ENCODE measurements at regions of chr1 and their contacts with region 1.

Region 1: DNA sequence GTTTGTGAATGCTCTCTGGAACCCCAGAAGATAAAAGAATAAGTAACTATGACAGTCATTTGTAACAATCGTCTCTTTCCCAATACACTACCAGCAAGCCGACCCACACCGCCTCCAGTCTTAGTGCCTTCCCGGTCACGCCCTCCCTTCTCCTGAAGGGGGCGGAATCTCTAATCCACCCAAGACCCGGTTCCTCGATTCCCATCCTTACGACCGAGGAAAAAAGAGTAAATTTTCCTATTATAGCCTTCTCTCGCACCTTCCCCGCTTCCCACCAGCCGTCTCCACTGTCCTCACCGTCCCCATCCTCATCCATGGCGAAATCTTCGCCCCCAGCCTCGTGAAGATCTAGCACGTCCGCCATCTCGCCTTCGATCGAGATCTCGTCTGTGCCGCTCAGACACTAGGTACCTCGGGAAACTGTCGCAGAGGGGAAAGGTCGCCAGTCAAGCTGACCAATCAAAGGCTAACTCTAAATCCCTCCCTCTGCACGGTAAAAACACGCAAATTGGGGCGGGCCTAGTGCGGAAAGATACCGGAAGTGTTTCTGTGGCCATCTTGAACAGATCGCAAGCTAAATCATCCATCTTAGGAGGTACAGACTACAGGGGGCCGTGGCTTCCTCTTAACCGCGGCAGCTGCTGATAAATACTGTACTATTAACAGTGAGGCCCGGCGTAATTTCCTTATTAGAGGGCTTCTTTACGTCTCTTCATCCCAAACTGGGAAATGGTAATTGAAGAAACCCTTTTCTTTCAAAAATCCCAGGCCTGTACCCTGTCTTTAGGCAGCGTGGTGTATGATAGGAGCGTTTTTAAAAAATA is at the start of gene RBM8A:
- DNase-seq: peak; percentile 81 to 98 (median 90)
- ATAC-seq: peak; percentile 97
- H3K4me3 ChIP-seq: peak within 1 kb of the TSS; percentile 70
- H3K27ac ChIP-seq: peak within 1 kb of the TSS; percentile 96
- H3K4me1 ChIP-seq: peaks cover 10 to 12% of the 10 kb centered on the region in 2 experiments; a peak in 4 of 5 replicates
- H3K27me3 ChIP-seq: no peaks in the 10 kb centered on the region
- CTCF ChIP-seq: peak; percentile 49 to 78 (median 49)
- EP300 ChIP-seq: no peak
- POLR2A ChIP-seq: peak; percentile 99
- RAD21 ChIP-seq: peak; percentile 22 to 39; a peak in 3 of 4 replicates
- polyA plus RNA-seq, gene RBM8A: 763 to 1,035 TPM

Region 2: DNA sequence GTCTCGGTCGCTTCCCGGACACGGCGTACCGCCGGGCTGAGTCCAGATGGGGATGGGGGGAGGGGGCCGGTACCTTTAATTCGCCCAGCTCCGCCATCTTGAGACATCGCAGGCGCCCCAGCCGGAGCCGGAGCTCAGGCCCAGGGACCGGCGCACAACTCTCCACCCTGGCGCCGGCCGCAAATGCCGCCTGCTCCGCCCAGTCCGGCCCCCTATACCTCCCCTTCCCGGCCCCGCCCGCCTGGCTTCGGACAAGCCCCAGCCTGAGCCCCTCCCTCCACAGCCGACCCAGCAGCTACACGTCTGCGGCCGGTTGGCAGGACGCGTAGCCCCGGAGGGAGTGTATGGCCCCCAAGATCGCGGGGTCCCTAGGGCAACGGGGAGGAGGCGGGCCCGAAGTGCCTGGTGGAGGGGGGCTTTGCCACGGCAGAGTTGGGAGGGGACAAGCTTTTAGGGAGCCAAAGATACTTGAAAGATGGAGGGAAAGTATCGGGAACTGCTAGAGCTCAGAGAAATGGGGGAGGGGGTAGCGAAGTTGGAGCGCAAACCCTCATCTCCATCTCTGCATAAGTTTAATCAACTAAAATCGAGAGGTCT is 68.3 kb before region 1 on chr1 and contains the start of gene PIAS3:
- CTCF ChIA-PET with region 1: no interaction called
- POLR2A ChIA-PET with region 1: interaction called, 11 read pairs
- in situ Hi-C with region 1: no loop called
- intact Hi-C with region 1: no loop called
- DNase-seq: peak; percentile 94 to 97 (median 96)
- ATAC-seq: peak; percentile 95
- H3K4me3 ChIP-seq: peak within 1 kb of the TSS; percentile 82
- H3K27ac ChIP-seq: peak within 1 kb of the TSS; percentile 73
- H3K4me1 ChIP-seq: peaks cover 10 to 18% of the 10 kb centered on the region in 2 experiments; a peak in 4 of 5 replicates
- H3K27me3 ChIP-seq: no peaks in the 10 kb centered on the region
- CTCF ChIP-seq: no peak
- EP300 ChIP-seq: no peak
- POLR2A ChIP-seq: peak; percentile 67
- RAD21 ChIP-seq: no peak
- polyA plus RNA-seq, gene PIAS3: 1.1 to 1.5 TPM

Region 3: GRCh38 chr1:145957443-145958319 is 30.4 kb after region 1 on chr1 and contains the start of gene LIX1L:
- CTCF ChIA-PET with region 1: no interaction called
- POLR2A ChIA-PET with region 1: interaction called, 16 read pairs
- in situ Hi-C with region 1: no loop called
- intact Hi-C with region 1: loop called (anchors 2 kb)
- DNase-seq: peak; percentile 87 to 97 (median 92)
- ATAC-seq: peak; percentile 97
- H3K4me3 ChIP-seq: peak within 1 kb of the TSS; percentile 79
- H3K27ac ChIP-seq: peak within 1 kb of the TSS; percentile 74
- H3K4me1 ChIP-seq: peaks cover 25 to 30% of the 10 kb centered on the region in 2 experiments; a peak in 4 of 5 replicates
- H3K27me3 ChIP-seq: no peaks in the 10 kb centered on the region; a peak in 1 of 5 replicates
- CTCF ChIP-seq: no peak
- EP300 ChIP-seq: no peak; the same call in 1 of the 2 replicates
- POLR2A ChIP-seq: peak; percentile 69
- RAD21 ChIP-seq: no peak
- polyA plus RNA-seq, gene LIX1L: 4.6 to 9.2 TPM

Region 4: DNA sequence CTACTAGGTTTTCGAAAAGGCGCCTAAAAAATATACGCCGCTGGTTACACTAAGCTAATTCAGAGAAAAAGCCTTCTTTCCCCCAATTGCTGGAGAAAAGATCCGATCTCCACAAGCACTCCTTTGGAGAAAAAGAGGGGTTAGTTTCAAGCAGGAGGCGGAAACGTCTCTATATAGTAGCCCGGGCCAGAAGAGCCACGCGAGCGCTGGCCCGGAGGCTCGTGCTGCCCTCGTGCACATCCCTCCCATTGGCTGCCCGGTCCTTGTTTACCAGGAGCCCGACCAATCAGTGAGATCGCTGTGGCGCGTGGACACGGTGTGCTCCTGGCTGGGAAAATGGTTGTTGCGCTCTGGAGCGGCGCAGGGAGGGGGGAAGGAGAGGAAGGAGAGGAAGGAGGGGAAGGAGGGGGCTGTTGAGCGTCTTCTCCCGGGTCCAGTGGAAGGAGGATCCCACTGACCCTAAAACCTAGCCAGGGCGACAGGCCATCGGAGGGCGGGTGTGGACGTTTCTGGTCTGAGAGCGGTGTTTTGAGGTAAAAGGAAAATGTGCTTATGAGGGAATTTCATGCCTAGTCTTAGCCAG is 69.2 kb after region 1 on chr1 and contains the start of gene TXNIP:
- CTCF ChIA-PET with region 1: no interaction called
- POLR2A ChIA-PET with region 1: interaction called, 10 read pairs
- in situ Hi-C with region 1: no loop called
- intact Hi-C with region 1: no loop called
- DNase-seq: peak; percentile 99 to 100 (median 100)
- ATAC-seq: peak; percentile 71
- H3K4me3 ChIP-seq: peak within 1 kb of the TSS; percentile 85
- H3K27ac ChIP-seq: peak within 1 kb of the TSS; percentile 99
- H3K4me1 ChIP-seq: peaks cover 14 to 31% of the 10 kb centered on the region in 2 experiments; a peak in 3 of 5 replicates
- H3K27me3 ChIP-seq: no peaks in the 10 kb centered on the region
- CTCF ChIP-seq: peak in 1 of 3 experiments; percentile 4; a peak in 1 of 6 replicates
- EP300 ChIP-seq: peak; percentile 91
- POLR2A ChIP-seq: peak; percentile 100
- RAD21 ChIP-seq: no peak
- polyA plus RNA-seq, gene TXNIP: 120 to 237 TPM